ENCODE measurements at regions of chr12 and their contacts with region 1.

Region 1: GRCh38 chr12:13278249-13278787 is 81.8 kb downstream of the EMP1 start:
- DNase-seq: peak; percentile 69 to 76 (median 72)
- ATAC-seq: peak; percentile 94 to 98 (median 97)
- H3K4me3 ChIP-seq: no peak overlapping the region
- H3K27ac ChIP-seq: no peak overlapping the region
- H3K4me1 ChIP-seq: peaks cover 0 to 6% (median 0%) of the 10 kb centered on the region in 4 donors
- H3K27me3 ChIP-seq: no peaks in the 10 kb centered on the region
- CTCF ChIP-seq: peak; percentile 78 to 99 (median 94)
- POLR2A ChIP-seq: no peak

Region 2: GRCh38 chr12:12985817-12986408 is 292.4 kb before region 1 on chr12:
- intact Hi-C with region 1: no loop called
- DNase-seq: no peak
- ATAC-seq: peak; percentile 76 to 80 (median 77)
- H3K4me3 ChIP-seq: no peak overlapping the region
- H3K27ac ChIP-seq: no peak overlapping the region
- H3K4me1 ChIP-seq: no peaks in the 10 kb centered on the region
- H3K27me3 ChIP-seq: no peaks in the 10 kb centered on the region
- CTCF ChIP-seq: peak; percentile 30 to 41 (median 34)
- POLR2A ChIP-seq: no peak

Region 3: GRCh38 chr12:13179211-13180074 is 98.9 kb before region 1 on chr12:
- intact Hi-C with region 1: no loop called
- DNase-seq: no peak
- ATAC-seq: peak; percentile 34 to 48 (median 46)
- H3K4me3 ChIP-seq: no peak overlapping the region
- H3K27ac ChIP-seq: no peak overlapping the region
- H3K4me1 ChIP-seq: no peaks in the 10 kb centered on the region
- H3K27me3 ChIP-seq: no peaks in the 10 kb centered on the region
- CTCF ChIP-seq: no peak
- POLR2A ChIP-seq: no peak

Region 4: GRCh38 chr12:13233830-13234641 is 44.3 kb before region 1 on chr12:
- intact Hi-C with region 1: no loop called
- DNase-seq: no peak
- ATAC-seq: peak; percentile 41 to 69 (median 50)
- H3K4me3 ChIP-seq: no peak overlapping the region
- H3K27ac ChIP-seq: no peak overlapping the region
- H3K4me1 ChIP-seq: no peaks in the 10 kb centered on the region
- H3K27me3 ChIP-seq: no peaks in the 10 kb centered on the region
- CTCF ChIP-seq: peak; percentile 48 to 77 (median 59)
- POLR2A ChIP-seq: no peak

Region 5: GRCh38 chr12:13534645-13535398 is 256.5 kb after region 1 on chr12:
- intact Hi-C with region 1: loop called in 1 of 2 experiments (anchors 10 kb)
- DNase-seq: peak; percentile 67 to 77 (median 69)
- ATAC-seq: peak; percentile 85 to 92 (median 90)
- H3K4me3 ChIP-seq: peak overlapping the region in 1 of 3 donors; percentile 12
- H3K27ac ChIP-seq: no peak overlapping the region
- H3K4me1 ChIP-seq: no peaks in the 10 kb centered on the region
- H3K27me3 ChIP-seq: no peaks in the 10 kb centered on the region
- CTCF ChIP-seq: peak; percentile 84 to 96 (median 90)
- POLR2A ChIP-seq: no peak

Region 6: GRCh38 chr12:13661005-13661887 is 382.9 kb after region 1 on chr12:
- intact Hi-C with region 1: loop called in 1 of 2 experiments (anchors 10 kb)
- DNase-seq: peak in 2 of 3 donors; percentile 27 to 55
- ATAC-seq: peak; percentile 98 to 99 (median 98)
- H3K4me3 ChIP-seq: no peak overlapping the region
- H3K27ac ChIP-seq: no peak overlapping the region
- H3K4me1 ChIP-seq: no peaks in the 10 kb centered on the region
- H3K27me3 ChIP-seq: no peaks in the 10 kb centered on the region
- CTCF ChIP-seq: peak; percentile 81 to 90 (median 84)
- POLR2A ChIP-seq: no peak

Measured in right lobe of liver (tissue), 6 donors.